ENCODE measurements at regions of chr13 and their contacts with region 1.

Region 1: GRCh38 chr13:75312884-75313520 is 169.0 kb downstream of the TBC1D4 start:
- DNase-seq: no peak
- ATAC-seq: peak; percentile 54
- H3K4me3 ChIP-seq: no peak overlapping the region
- H3K27ac ChIP-seq: no peak overlapping the region
- H3K4me1 ChIP-seq: peaks cover under 1% of the 10 kb centered on the region; the same call in 1 of the 2 replicates
- H3K27me3 ChIP-seq: no peaks in the 10 kb centered on the region
- CTCF ChIP-seq: no peak
- EP300 ChIP-seq: no peak
- POLR2A ChIP-seq: no peak
- RAD21 ChIP-seq: no peak

Region 2: GRCh38 chr13:75299913-75300862 is 12.8 kb before region 1 on chr13:
- CTCF ChIA-PET with region 1: interaction called, 3 read pairs
- POLR2A ChIA-PET with region 1: interaction called, 8 read pairs
- RAD21 ChIA-PET with region 1: interaction called, 5 read pairs
- SMC1A ChIA-PET with region 1: interaction called, 32 read pairs
- in situ Hi-C with region 1: no loop called
- intact Hi-C with region 1: no loop called
- DNase-seq: peak; percentile 67
- ATAC-seq: peak; percentile 80
- H3K4me3 ChIP-seq: no peak overlapping the region
- H3K27ac ChIP-seq: peak overlapping the region; percentile 78
- H3K4me1 ChIP-seq: peaks cover 12% of the 10 kb centered on the region
- H3K27me3 ChIP-seq: no peaks in the 10 kb centered on the region
- CTCF ChIP-seq: no peak
- EP300 ChIP-seq: peak; percentile 62 to 71; a peak in 3 of 4 replicates
- POLR2A ChIP-seq: no peak
- RAD21 ChIP-seq: no peak

Region 3: DNA sequence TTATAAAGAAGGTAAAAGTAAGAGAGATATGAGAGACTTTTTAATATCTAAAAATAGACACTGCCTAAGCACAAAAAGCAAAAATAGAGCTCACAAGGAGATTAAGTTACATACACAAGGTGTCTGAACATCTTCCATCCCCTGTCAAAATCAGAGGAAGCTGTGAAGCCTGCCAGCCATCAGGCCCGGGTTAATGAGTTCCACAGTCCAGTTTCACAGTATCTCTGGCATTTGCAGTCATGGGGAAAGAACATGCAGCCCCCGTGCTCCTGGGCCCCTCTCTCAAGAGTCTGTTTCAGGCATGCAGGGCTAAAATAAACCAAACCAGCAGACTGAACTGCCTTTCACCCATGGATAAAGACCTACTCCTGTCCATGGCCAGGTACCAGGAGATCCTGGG is 89.8 kb after region 1 on chr13:
- CTCF ChIA-PET with region 1: no interaction called
- POLR2A ChIA-PET with region 1: no interaction called
- RAD21 ChIA-PET with region 1: no interaction called
- SMC1A ChIA-PET with region 1: no interaction called
- in situ Hi-C with region 1: no loop called
- intact Hi-C with region 1: no loop called
- DNase-seq: no peak
- ATAC-seq: no peak
- H3K4me3 ChIP-seq: no peak overlapping the region
- H3K27ac ChIP-seq: no peak overlapping the region
- H3K4me1 ChIP-seq: no peaks in the 10 kb centered on the region
- H3K27me3 ChIP-seq: no peaks in the 10 kb centered on the region
- CTCF ChIP-seq: no peak
- EP300 ChIP-seq: no peak
- POLR2A ChIP-seq: no peak
- RAD21 ChIP-seq: no peak

Region 4: GRCh38 chr13:75416327-75417005 is 103.5 kb after region 1 on chr13:
- CTCF ChIA-PET with region 1: no interaction called
- POLR2A ChIA-PET with region 1: no interaction called
- RAD21 ChIA-PET with region 1: no interaction called
- SMC1A ChIA-PET with region 1: no interaction called
- in situ Hi-C with region 1: no loop called
- intact Hi-C with region 1: no loop called
- DNase-seq: peak; percentile 36
- ATAC-seq: peak; percentile 90
- H3K4me3 ChIP-seq: no peak overlapping the region
- H3K27ac ChIP-seq: peak overlapping the region; percentile 4; the same call in 1 of the 2 replicates
- H3K4me1 ChIP-seq: peaks cover 17% of the 10 kb centered on the region
- H3K27me3 ChIP-seq: no peaks in the 10 kb centered on the region
- CTCF ChIP-seq: peak in 2 of 3 experiments; percentile 18 to 22; a peak in 2 of 6 replicates
- EP300 ChIP-seq: no peak
- POLR2A ChIP-seq: no peak
- RAD21 ChIP-seq: peak; percentile 62

Region 5: DNA sequence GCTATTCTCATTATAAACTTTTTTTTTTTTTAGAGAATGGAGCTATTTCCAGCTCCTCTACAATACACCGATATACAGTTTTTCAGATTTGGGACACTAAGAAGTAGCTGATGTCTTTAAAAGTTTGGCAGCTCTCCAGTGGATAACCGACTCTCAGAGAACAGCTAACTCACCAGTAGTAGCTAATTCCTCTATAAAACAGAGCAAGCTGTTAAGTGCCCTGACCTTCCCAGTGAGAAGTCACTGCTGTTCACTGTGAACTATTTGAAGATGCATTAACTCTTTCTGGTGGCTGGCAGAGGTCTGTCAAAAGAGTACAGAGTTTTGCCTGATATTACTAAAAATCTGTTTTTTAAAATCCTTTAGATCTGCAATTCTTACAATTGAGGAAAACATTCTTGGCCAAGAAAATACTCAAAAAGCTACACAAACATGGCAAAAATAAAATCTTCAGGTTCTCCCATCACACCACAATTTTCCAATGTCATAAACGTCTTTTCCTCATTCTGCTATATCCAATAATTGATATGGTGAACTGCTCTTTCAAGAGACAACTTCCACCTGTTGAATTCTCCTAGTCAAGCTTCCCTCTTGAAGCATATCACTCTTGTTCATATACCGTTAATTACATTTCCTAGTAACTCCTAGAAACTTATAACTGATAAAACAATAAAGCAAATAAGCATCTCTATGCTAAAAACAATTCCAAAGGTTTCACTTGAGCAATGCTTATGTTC is 124.7 kb after region 1 on chr13:
- CTCF ChIA-PET with region 1: no interaction called
- POLR2A ChIA-PET with region 1: no interaction called
- RAD21 ChIA-PET with region 1: no interaction called
- SMC1A ChIA-PET with region 1: no interaction called
- in situ Hi-C with region 1: no loop called
- intact Hi-C with region 1: no loop called
- DNase-seq: no peak
- ATAC-seq: no peak
- H3K4me3 ChIP-seq: no peak overlapping the region
- H3K27ac ChIP-seq: no peak overlapping the region
- H3K4me1 ChIP-seq: no peaks in the 10 kb centered on the region
- H3K27me3 ChIP-seq: no peaks in the 10 kb centered on the region
- CTCF ChIP-seq: no peak
- EP300 ChIP-seq: no peak
- POLR2A ChIP-seq: no peak
- RAD21 ChIP-seq: no peak

Measured in GM12878 (cell line).